ENCODE measurements at regions of chr17 and their contacts with region 1.

Region 1: GRCh38 chr17:67492824-67493517 is 115.9 kb downstream of the PITPNC1 start:
- H3K4me3 ChIP-seq: no peak overlapping the region
- H3K27ac ChIP-seq: no peak overlapping the region
- H3K4me1 ChIP-seq: peaks cover 24% of the 10 kb centered on the region
- CTCF ChIP-seq: no peak

Region 2: GRCh38 chr17:67221062-67221998 is 271.6 kb before region 1 on chr17:
- CTCF ChIA-PET with region 1: no interaction called
- POLR2A ChIA-PET with region 1: no interaction called
- H3K4me3 ChIP-seq: no peak overlapping the region
- H3K27ac ChIP-seq: no peak overlapping the region
- H3K4me1 ChIP-seq: peaks cover 3% of the 10 kb centered on the region; the same call in 1 of the 2 replicates
- CTCF ChIP-seq: peak; percentile 45; the same call in 1 of the 2 replicates

Region 3: DNA sequence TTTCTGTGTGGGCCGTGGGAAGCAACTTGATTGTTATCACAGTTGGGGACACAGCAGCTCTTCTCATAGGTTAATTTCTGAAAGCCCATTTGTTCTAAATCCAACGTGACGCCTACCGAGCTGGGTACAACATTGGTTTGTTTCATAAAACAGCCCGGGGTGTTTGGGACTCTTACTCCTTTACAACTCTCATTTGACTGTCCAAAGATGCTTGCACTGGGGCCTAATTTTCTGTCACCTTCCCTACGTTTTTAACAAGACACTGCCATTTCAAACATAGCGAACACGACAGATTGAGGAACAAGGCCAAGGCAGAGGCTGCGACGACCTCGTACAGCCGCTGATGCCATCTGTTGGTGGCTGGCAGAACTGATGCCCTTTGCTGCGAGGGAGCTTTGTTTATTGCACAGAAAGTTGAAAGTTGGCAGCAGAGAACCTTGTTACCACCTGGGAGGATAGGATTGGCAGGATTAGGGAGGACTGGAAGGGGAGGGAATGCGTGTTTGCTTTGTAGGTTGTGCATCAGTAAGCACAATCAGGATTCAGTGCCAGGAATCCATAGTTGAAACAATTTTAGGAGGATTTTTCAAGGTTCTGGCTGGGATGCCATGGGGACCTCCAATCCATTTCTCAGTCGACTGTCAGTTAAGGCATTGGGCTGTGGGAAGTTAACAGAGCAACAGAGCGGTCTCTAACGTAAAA is 17.6 kb before region 1 on chr17:
- CTCF ChIA-PET with region 1: interaction called, 11 read pairs
- POLR2A ChIA-PET with region 1: no interaction called
- H3K4me3 ChIP-seq: no peak overlapping the region
- H3K27ac ChIP-seq: no peak overlapping the region
- H3K4me1 ChIP-seq: no peaks in the 10 kb centered on the region; the same call in 1 of the 2 replicates
- CTCF ChIP-seq: peak; percentile 89